Activated T-helper 1 cell treated with anti-CD3 and anti-CD28 coated beads, Interleukin-12 subunit alpha, Interleukin-12 subunit beta, Interleukin-2, Interleukin-4 antibody, amounts not matched to agents 30 ng/mL and 10 ng/mL and 1 ng/mL, durations not matched to agents 14 hours and 24 hours and 36 hours (primary cell): ENCODE measurements at regions of chr11 and their contacts with region 1.

Region 1: DNA sequence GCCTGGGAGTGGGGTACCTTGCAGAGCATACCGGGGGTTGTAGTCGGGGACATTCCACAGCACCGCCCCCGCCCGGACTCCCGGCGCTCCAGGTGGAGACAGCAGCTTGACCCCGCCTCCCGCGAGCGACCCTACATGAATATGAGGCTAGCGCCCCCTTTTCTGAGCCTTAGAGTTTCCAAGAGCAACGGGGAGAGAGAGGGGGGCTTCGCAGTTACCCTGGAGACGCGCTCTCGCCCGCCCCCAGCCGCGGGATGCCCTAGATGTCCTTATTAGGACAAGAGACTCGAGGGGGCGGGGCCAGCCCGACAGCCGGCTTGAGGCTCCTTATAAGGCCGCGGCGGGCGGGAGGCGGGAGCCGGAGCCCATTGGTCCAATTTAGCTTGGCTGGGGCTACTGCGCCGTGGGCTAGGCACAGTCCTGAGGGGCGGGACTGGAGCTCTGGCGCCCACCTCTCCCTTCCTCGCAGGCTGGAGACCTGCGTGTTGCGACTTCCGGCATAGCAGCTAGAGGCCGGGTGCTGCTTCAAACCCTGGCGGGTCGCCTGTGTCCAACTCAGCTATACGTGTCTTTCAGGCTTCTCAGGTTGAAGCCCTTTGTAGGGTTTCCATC is 927 bp upstream of the MUS81 start:
- DNase-seq: peak; percentile 97
- H3K4me3 Mint-ChIP-seq: peak overlapping the region; percentile 96
- H3K27ac Mint-ChIP-seq: peak overlapping the region; percentile 99
- H3K4me1 Mint-ChIP-seq: peaks cover 49% of the 10 kb centered on the region
- H3K27me3 Mint-ChIP-seq: no peaks in the 10 kb centered on the region

Region 2: GRCh38 chr11:65615229-65615941 is 243.9 kb before region 1 on chr11 and contains the start of gene PCNX3:
- intact Hi-C with region 1: loop called (anchors 1 kb)
- DNase-seq: peak; percentile 100
- H3K4me3 Mint-ChIP-seq: peak within 1 kb of the TSS; percentile 97
- H3K27ac Mint-ChIP-seq: peak within 1 kb of the TSS; percentile 94
- H3K4me1 Mint-ChIP-seq: peaks cover 27% of the 10 kb centered on the region
- H3K27me3 Mint-ChIP-seq: no peaks in the 10 kb centered on the region
- total RNA-seq, gene PCNX3: 55.0 and 55.2 TPM in 2 replicates

Region 3: DNA sequence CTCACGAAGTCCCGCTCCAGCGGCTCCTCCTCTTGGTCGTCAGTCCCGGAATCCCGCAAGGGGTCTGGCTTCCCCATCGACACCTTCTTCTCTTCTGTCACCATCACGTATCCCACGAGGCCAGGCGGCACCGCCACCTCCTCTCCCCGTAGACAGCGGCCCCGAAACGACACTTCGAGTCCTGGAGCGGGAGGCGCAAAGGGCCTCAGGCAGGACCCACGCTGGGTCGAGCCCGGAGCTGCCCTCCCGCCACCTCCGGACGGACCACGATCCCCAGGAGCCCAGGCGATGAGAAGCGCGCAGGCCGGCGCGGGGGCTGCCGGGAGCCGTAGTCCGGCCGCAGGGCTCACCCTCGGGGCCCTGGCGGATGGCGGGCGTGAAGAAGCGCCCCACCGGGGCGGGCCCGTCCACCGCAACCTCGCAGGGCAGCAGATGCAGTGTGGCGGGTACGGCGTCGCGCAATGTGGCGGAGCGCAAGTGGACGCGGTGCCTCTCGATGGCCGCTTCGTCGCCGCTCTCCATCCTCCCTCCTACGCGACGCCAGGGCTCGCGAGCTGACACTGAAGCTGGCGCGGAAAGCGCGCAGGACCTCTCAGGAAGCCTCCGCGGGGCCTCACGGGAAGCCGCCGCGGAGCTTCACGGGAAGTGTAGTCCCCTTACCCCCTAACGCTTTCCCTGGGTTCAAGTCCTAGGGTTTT is 138.9 kb before region 1 on chr11 and contains the start of gene RNASEH2C:
- intact Hi-C with region 1: loop called (anchors 1 kb)
- DNase-seq: peak; percentile 76
- H3K4me3 Mint-ChIP-seq: peak within 1 kb of the TSS; percentile 97
- H3K27ac Mint-ChIP-seq: peak within 1 kb of the TSS; percentile 93
- H3K4me1 Mint-ChIP-seq: peaks cover 22% of the 10 kb centered on the region
- H3K27me3 Mint-ChIP-seq: peaks cover 2% of the 10 kb centered on the region
- total RNA-seq, gene RNASEH2C: 87.6 and 89.0 TPM in 2 replicates

Region 4: GRCh38 chr11:65873318-65874156 is 14.2 kb after region 1 on chr11:
- intact Hi-C with region 1: loop called (anchors 1 kb)
- DNase-seq: peak; percentile 97
- H3K4me3 Mint-ChIP-seq: peak overlapping the region; percentile 90
- H3K27ac Mint-ChIP-seq: peak overlapping the region; percentile 72
- H3K4me1 Mint-ChIP-seq: peaks cover 16% of the 10 kb centered on the region
- H3K27me3 Mint-ChIP-seq: peaks cover 1% of the 10 kb centered on the region

Region 5: GRCh38 chr11:65961232-65961901 is 102.1 kb after region 1 on chr11 and contains the start of gene SART1:
- intact Hi-C with region 1: loop called (anchors 1 kb)
- DNase-seq: peak; percentile 94
- H3K4me3 Mint-ChIP-seq: peak within 1 kb of the TSS; percentile 98
- H3K27ac Mint-ChIP-seq: peak within 1 kb of the TSS; percentile 99
- H3K4me1 Mint-ChIP-seq: peaks cover 41% of the 10 kb centered on the region
- H3K27me3 Mint-ChIP-seq: no peaks in the 10 kb centered on the region
- total RNA-seq, gene SART1: 110 TPM in 2 replicates

Region 6: DNA sequence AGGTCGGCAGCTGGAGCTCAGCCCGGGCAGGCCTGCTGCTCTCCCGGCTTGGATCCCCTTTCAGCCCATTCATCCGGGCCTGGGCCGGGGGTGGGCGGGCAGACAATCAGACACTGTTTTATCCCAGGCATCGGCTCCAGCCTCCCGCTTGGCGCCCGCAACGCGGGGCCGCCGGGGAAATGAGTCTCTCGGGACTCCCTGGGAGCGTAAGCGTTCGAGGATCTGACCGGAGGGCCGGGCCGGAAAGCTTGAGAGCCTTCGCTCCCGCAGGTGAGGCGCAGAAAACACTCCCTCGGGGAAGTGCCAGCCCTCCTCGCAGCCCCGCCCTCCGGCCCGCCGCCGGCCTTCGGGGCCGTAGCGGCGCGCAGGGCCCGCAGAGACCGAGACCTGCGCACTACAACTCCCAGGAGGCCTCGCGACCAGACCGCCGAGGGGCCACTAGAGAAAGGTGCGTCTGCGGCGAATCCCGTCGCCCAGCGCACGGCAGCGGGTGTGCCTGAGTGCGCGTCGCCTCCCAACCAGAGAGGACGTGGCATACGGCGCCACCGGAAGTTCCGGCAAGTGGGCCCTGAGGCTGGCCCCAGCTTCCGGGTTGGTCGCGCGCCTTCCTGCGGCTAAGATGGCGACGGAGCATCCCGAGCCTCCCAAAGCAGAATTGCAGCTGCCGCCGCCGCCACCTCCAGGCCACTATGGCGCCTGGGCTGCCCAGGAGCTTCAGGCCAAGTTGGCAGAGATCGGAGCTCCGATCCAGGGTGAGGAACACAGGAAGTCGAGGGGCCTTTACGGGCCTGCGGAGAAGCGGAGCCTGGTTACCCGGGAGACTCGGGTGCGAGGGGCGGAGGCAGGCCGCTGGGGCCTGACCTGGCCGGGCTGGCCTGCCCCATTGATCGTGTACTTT is 192.7 kb after region 1 on chr11 and contains the start of gene SF3B2:
- intact Hi-C with region 1: loop called (anchors 1 kb)
- DNase-seq: peak; percentile 97
- H3K4me3 Mint-ChIP-seq: peak within 1 kb of the TSS; percentile 100
- H3K27ac Mint-ChIP-seq: peak within 1 kb of the TSS; percentile 97
- H3K4me1 Mint-ChIP-seq: peaks cover 33% of the 10 kb centered on the region
- H3K27me3 Mint-ChIP-seq: peaks cover 4% of the 10 kb centered on the region
- total RNA-seq, gene SF3B2: 267 TPM in 2 replicates